ENCODE measurements at regions of chr17 and their contacts with region 1.

Region 1: GRCh38 chr17:28902819-28903545 is at the start of gene DHRS13:
- DNase-seq: peak; percentile 93
- ATAC-seq: peak; percentile 95
- H3K4me3 Mint-ChIP-seq: peak within 1 kb of the TSS; percentile 88
- H3K27ac Mint-ChIP-seq: peak within 1 kb of the TSS; percentile 86
- H3K4me1 Mint-ChIP-seq: peaks cover 31% of the 10 kb centered on the region
- H3K27me3 Mint-ChIP-seq: no peaks in the 10 kb centered on the region
- CTCF ChIP-seq: peak; percentile 100
- total RNA-seq, gene DHRS13: 37.3 to 38.2 TPM

Region 2: GRCh38 chr17:28854457-28855350 is 48.3 kb before region 1 on chr17 and contains the start of gene ERAL1:
- CTCF ChIA-PET with region 1: interaction called, 61 read pairs
- POLR2A ChIA-PET with region 1: interaction called, 7 read pairs
- intact Hi-C with region 1: loop called (anchors 5 kb)
- DNase-seq: peak; percentile 93
- ATAC-seq: peak; percentile 99
- H3K4me3 Mint-ChIP-seq: peak within 1 kb of the TSS; percentile 79
- H3K27ac Mint-ChIP-seq: peak within 1 kb of the TSS; percentile 88
- H3K4me1 Mint-ChIP-seq: peaks cover 30% of the 10 kb centered on the region
- H3K27me3 Mint-ChIP-seq: no peaks in the 10 kb centered on the region
- CTCF ChIP-seq: no peak
- total RNA-seq, gene ERAL1: 58.2 to 60.0 TPM

Region 3: GRCh38 chr17:28916302-28916934 is 13.4 kb after region 1 on chr17:
- CTCF ChIA-PET with region 1: interaction called, 25 read pairs
- POLR2A ChIA-PET with region 1: interaction called, 6 read pairs
- intact Hi-C with region 1: no loop called
- DNase-seq: peak; percentile 65
- ATAC-seq: peak; percentile 79
- H3K4me3 Mint-ChIP-seq: no peak overlapping the region
- H3K27ac Mint-ChIP-seq: no peak overlapping the region
- H3K4me1 Mint-ChIP-seq: peaks cover 15% of the 10 kb centered on the region
- H3K27me3 Mint-ChIP-seq: no peaks in the 10 kb centered on the region
- CTCF ChIP-seq: peak; percentile 79

Measured in activated CD8-positive, alpha-beta T cell treated with anti-CD3 and anti-CD28 coated beads for 36 hours (primary cell).